ENCODE measurements at regions of chr2 and their contacts with region 1.

Region 1: DNA sequence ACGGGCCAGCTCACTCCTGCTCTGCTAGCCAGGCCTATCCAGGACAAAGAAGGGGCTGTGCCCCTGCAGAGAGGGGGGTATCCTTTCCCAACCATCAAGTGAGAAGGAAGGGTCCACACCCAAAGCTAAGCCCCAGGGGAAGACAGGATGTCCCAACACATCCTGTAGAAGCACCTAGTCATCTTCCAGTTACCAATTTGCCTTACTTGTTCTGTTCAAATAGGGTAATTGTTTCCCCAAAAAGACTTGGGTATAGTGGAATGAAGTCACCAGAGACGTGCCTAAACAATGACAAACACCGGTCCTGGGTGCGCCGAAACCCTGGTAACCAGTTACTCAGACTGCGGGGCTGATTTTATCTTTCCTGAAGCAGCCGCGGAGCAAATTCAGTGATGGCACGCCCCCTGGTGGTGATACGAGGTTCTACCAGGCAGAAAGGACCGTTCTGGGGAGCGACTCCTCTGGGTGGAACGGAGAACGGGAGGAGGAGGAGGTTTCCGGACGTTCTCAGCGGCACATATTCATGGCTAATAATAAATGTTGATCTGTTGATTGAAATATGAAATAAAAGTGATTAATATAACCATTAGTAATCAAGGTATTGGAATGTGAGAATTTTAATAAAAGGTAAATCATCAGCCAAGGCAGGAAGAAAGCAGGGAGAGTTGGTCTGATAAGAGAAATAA is 109.3 kb upstream of the STON1 start:
- DNase-seq: peak; percentile 80 to 89
- ATAC-seq: peak; percentile 86 to 94
- H3K4me3 ChIP-seq: peak overlapping the region; percentile 14; the same call in 2 of the 3 replicates
- H3K27ac ChIP-seq: peak overlapping the region; percentile 75 to 85
- H3K4me1 ChIP-seq: peaks cover 23% of the 10 kb centered on the region
- CTCF ChIP-seq: peak; percentile 99
- EP300 ChIP-seq: 0 out of 5 replicates have a peak, but pooled peaks of 1 of the 2 experiments have one; percentile 25
- POLR2A ChIP-seq: no peak
- RAD21 ChIP-seq: peak; percentile 100

Region 2: DNA sequence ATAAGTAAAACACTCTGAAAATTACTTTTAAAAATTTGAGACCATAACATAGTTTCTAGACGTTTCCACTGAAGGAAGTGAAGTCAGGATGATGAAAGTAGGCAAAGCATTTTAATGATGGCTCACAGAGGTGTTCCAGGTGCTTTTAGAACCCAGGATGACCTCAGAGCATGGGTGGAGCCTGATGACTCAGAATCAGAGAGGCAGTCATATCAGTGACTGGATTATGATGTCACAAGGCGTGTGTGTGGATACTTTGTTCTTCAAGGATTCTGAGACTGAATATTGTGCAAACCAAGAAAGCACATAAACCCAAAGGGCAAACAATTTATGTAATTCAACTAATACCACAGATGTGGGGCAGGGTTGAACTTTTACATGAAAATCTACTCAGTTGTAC is 306.4 kb before region 1 on chr2:
- CTCF ChIA-PET with region 1: interaction called, 31 read pairs
- POLR2A ChIA-PET with region 1: no interaction called
- DNase-seq: peak; percentile 52 to 91
- ATAC-seq: peak in 1 of 2 experiments; percentile 39; a peak in 1 of 6 replicates
- H3K4me3 ChIP-seq: no peak overlapping the region
- H3K27ac ChIP-seq: peak overlapping the region; percentile 44 to 96; a peak in 4 of 6 replicates
- H3K4me1 ChIP-seq: peaks cover 42% of the 10 kb centered on the region
- CTCF ChIP-seq: no peak
- EP300 ChIP-seq: peak; percentile 36 to 38; a peak in 2 of 5 replicates
- POLR2A ChIP-seq: no peak
- RAD21 ChIP-seq: no peak

Region 3: GRCh38 chr2:48406116-48406515 is 14.5 kb before region 1 on chr2:
- CTCF ChIA-PET with region 1: interaction called, 14 read pairs
- POLR2A ChIA-PET with region 1: no interaction called
- DNase-seq: no peak
- ATAC-seq: no peak
- H3K4me3 ChIP-seq: no peak overlapping the region
- H3K27ac ChIP-seq: no peak overlapping the region
- H3K4me1 ChIP-seq: peaks cover 6% of the 10 kb centered on the region; the same call in 1 of the 3 replicates
- CTCF ChIP-seq: no peak
- EP300 ChIP-seq: no peak
- POLR2A ChIP-seq: no peak
- RAD21 ChIP-seq: no peak

Region 4: DNA sequence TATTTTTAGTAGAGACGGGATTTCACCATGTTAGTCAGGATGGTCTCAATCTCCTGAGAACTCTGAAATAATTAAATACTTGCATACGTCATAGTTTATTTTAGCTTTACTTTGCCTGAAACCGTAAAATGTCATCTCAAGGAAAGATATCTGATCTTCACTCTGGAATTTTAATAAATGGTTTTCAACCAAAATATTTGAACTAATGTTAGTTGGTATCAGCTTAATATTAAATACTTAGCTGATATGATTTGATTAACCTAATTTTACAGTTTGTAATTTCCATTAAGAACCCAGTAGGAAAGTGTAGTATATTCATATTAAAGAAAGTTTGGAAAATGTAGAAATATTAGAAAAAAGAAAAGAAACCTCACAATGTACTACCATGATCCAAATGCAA is 67.9 kb after region 1 on chr2:
- CTCF ChIA-PET with region 1: no interaction called
- POLR2A ChIA-PET with region 1: no interaction called
- DNase-seq: no peak
- ATAC-seq: no peak
- H3K4me3 ChIP-seq: no peak overlapping the region
- H3K27ac ChIP-seq: no peak overlapping the region
- H3K4me1 ChIP-seq: no peaks in the 10 kb centered on the region
- CTCF ChIP-seq: no peak
- EP300 ChIP-seq: no peak
- POLR2A ChIP-seq: no peak
- RAD21 ChIP-seq: no peak

Measured in A549 (cell line).